HepG2 (cell line): ENCODE measurements at regions of chr22 and their contacts with region 1.

Region 1: GRCh38 chr22:22959147-22959827 is 71.7 kb downstream of the IGLL5 start:
- DNase-seq: peak; percentile 78
- ATAC-seq: peak; percentile 68
- H3K4me3 ChIP-seq: no peak overlapping the region
- H3K27ac ChIP-seq: no peak overlapping the region
- H3K4me1 ChIP-seq: peaks cover 21% of the 10 kb centered on the region
- H3K27me3 ChIP-seq: peaks cover 0 to 10% of the 10 kb centered on the region in 2 experiments; a peak in 2 of 5 replicates
- CTCF ChIP-seq: peak; percentile 96
- EP300 ChIP-seq: no peak
- POLR2A ChIP-seq: no peak
- RAD21 ChIP-seq: peak; percentile 98

Region 2: DNA sequence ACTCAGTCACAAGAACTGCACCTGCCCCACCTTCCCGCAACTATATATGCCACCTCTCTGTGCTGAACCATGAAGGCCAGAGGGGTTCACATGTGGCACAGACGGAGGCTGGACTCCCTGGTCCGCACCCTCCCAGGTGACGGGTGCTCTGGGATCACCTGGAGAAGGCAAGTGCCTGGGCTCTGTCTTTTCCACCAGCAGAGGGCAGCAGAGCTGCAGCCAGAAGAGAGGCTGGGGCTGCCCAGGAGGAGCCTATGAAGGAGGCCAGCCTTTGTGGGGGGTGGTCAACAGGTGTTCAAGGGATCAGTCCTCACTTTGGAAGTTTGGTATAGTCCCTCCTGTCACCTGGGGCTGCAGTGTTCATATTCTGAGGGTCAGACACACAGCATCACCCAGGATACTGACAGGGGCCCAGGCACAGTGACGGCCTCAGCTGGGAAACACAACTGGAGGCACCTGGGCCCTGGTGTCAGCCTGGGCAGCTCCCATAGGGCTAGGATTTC is 110.9 kb before region 1 on chr22:
- CTCF ChIA-PET with region 1: interaction called, 23 read pairs
- POLR2A ChIA-PET with region 1: no interaction called
- in situ Hi-C with region 1: no loop called
- intact Hi-C with region 1: loop called (anchors 1 kb)
- DNase-seq: peak; percentile 50
- ATAC-seq: peak; percentile 98
- H3K4me3 ChIP-seq: no peak overlapping the region
- H3K27ac ChIP-seq: no peak overlapping the region
- H3K4me1 ChIP-seq: no peaks in the 10 kb centered on the region
- H3K27me3 ChIP-seq: peaks cover 0 to 30% of the 10 kb centered on the region in 2 experiments; a peak in 3 of 5 replicates
- CTCF ChIP-seq: peak; percentile 94
- EP300 ChIP-seq: no peak
- POLR2A ChIP-seq: no peak
- RAD21 ChIP-seq: peak; percentile 62; the same call in 1 of the 2 replicates

Region 3: DNA sequence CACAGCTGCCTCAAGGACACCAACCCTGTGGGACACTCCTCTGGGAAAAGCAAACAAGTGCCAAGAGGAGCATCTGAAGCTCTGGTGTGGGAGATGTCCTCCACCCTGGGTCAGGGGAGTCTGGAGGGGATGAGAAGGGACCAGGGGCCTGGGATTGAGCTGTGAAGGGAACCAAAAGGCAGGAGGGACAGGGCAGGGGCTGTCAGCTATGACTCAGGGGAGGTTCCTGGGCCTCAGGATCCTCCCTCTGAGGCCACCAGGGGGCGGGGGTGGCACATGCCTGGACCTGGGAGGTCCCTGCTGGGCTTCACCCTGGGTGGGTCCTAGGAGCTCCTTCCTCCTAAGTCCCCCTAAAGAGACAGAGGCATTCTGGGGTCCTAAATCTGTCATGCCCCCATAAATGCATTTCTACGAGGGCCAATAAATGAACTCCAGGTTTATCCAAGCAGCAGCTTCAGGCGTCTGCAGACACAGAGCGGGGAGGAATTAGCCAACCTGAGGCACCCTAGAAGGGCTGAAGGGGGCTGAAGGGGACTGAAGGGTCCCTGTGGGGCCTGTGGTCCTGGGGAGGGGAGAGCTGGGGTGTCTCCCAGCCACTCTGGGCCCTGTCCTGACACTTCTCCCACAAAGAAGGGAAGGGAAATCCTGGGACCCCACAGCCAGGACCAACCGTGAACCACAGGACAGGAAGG is 103.5 kb before region 1 on chr22:
- CTCF ChIA-PET with region 1: interaction called, 8 read pairs
- POLR2A ChIA-PET with region 1: no interaction called
- in situ Hi-C with region 1: loop called (anchors 5 kb)
- intact Hi-C with region 1: no loop called
- DNase-seq: peak; percentile 12
- ATAC-seq: peak; percentile 97
- H3K4me3 ChIP-seq: no peak overlapping the region
- H3K27ac ChIP-seq: no peak overlapping the region
- H3K4me1 ChIP-seq: peaks cover 18% of the 10 kb centered on the region
- H3K27me3 ChIP-seq: peaks cover 0 to 47% of the 10 kb centered on the region in 2 experiments; a peak in 2 of 5 replicates
- CTCF ChIP-seq: peak; percentile 68
- EP300 ChIP-seq: no peak
- POLR2A ChIP-seq: no peak
- RAD21 ChIP-seq: peak; percentile 36; the same call in 1 of the 2 replicates

Region 4: GRCh38 chr22:23128269-23129108 is 169.2 kb after region 1 on chr22:
- CTCF ChIA-PET with region 1: interaction called, 299 read pairs
- POLR2A ChIA-PET with region 1: interaction called, 8 read pairs
- in situ Hi-C with region 1: loop called (anchors 5 kb)
- intact Hi-C with region 1: loop called (anchors 1 kb)
- DNase-seq: peak; percentile 59
- ATAC-seq: peak; percentile 87
- H3K4me3 ChIP-seq: no peak overlapping the region
- H3K27ac ChIP-seq: no peak overlapping the region
- H3K4me1 ChIP-seq: peaks cover 7% of the 10 kb centered on the region
- H3K27me3 ChIP-seq: no peaks in the 10 kb centered on the region
- CTCF ChIP-seq: peak; percentile 94
- EP300 ChIP-seq: no peak
- POLR2A ChIP-seq: no peak
- RAD21 ChIP-seq: peak; percentile 99

Region 5: GRCh38 chr22:23281406-23282088 is 322.3 kb after region 1 on chr22:
- CTCF ChIA-PET with region 1: interaction called, 4 read pairs
- POLR2A ChIA-PET with region 1: no interaction called
- in situ Hi-C with region 1: loop called (anchors 25 kb)
- intact Hi-C with region 1: no loop called
- DNase-seq: peak; percentile 66
- ATAC-seq: peak; percentile 75
- H3K4me3 ChIP-seq: no peak overlapping the region
- H3K27ac ChIP-seq: no peak overlapping the region
- H3K4me1 ChIP-seq: peaks cover 38% of the 10 kb centered on the region
- H3K27me3 ChIP-seq: no peaks in the 10 kb centered on the region
- CTCF ChIP-seq: peak; percentile 98
- EP300 ChIP-seq: no peak
- POLR2A ChIP-seq: no peak
- RAD21 ChIP-seq: peak; percentile 96

Region 6: GRCh38 chr22:23385291-23386244 is 426.3 kb after region 1 on chr22:
- CTCF ChIA-PET with region 1: interaction called, 14 read pairs
- POLR2A ChIA-PET with region 1: no interaction called
- in situ Hi-C with region 1: loop called (anchors 25 kb)
- intact Hi-C with region 1: no loop called
- DNase-seq: peak; percentile 59
- ATAC-seq: peak; percentile 85
- H3K4me3 ChIP-seq: no peak overlapping the region
- H3K27ac ChIP-seq: no peak overlapping the region
- H3K4me1 ChIP-seq: peaks cover 27% of the 10 kb centered on the region
- H3K27me3 ChIP-seq: peaks cover 8 to 29% of the 10 kb centered on the region in 2 experiments; a peak in 4 of 5 replicates
- CTCF ChIP-seq: peak; percentile 99
- EP300 ChIP-seq: no peak
- POLR2A ChIP-seq: no peak
- RAD21 ChIP-seq: peak; percentile 97